Posterior vena cava (tissue), 2 donors: ENCODE measurements at regions of chr3 and their contacts with region 1.

Region 1: DNA sequence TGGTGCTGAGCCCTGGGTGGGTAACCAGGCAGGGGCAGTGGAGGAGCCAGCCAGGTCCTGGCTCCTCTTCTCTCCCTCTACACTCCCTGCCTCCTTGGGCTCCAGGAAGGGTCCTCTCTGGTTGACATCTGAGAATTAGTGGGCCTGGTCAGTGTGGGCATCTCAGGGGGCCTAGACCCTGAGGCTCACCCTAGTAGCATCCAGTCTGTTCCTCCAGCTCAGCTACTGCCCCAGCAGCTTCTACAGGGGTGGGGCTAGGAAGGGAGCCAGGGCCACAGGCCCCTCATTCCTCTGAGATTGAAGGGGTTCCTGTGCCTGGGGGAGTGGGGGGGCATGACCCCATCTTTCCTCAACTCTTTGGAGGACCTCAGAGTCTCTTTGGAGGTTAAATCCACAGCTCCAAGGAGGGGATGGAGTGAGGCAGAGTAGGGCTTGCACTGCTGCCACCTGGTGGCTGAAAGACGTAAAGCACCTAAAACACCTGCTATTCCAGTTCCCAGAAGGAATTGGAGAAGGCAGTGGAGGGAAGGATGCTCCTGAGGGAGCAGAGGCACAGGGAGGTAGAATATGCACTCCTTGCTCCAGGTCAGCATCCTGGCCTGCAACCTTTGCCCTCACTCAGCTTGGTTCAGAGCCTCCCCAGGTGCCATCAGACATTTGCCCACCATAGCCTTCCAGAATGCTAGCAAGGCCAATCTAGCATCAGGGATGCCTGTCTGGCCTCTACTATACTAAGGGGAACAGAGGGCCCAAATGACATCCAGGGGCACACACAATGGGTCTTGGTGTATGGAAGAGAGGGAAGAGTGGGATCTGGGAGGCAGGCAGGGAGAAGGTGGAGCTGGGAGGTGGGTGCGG is 25.1 kb downstream of the C3orf18 start:
- DNase-seq: peak; percentile 90

Region 2: DNA sequence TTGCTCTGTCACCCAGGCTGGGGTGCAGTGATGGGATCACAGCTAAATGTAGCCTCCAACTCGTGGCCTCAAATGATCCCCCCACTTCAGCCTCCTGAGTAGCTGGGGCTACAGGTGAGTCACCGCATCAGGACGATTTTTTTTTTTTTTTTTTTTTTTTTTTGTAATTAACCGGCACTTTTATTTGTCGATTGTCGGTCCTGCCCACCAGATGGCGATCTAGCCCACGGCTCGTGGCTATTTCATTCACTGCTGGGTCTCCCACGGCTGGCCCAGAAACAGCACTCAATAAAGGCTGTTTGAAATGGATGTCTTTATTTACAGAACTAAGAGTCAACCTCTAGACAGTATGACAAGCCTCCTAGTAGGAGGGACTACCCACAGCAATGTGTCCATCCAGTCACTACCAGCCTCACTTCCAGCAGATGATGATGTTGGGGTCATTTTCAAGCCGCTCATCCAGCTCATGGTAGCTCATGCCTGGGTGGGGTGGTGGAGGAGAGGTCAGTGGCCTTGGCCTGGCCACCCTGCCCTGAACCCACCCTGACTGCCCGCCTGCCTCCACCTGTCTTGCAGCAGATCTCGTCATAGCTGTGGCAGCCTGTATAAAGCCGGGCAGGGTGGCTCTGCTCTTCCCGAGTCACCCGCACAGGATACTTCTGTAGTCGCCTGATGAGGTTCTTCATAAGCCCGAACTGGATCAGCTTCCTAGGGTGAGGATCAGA is 195.1 kb before region 1 on chr3:
- intact Hi-C with region 1: loop called (anchors 2 to 5 kb)
- DNase-seq: no peak

Region 3: DNA sequence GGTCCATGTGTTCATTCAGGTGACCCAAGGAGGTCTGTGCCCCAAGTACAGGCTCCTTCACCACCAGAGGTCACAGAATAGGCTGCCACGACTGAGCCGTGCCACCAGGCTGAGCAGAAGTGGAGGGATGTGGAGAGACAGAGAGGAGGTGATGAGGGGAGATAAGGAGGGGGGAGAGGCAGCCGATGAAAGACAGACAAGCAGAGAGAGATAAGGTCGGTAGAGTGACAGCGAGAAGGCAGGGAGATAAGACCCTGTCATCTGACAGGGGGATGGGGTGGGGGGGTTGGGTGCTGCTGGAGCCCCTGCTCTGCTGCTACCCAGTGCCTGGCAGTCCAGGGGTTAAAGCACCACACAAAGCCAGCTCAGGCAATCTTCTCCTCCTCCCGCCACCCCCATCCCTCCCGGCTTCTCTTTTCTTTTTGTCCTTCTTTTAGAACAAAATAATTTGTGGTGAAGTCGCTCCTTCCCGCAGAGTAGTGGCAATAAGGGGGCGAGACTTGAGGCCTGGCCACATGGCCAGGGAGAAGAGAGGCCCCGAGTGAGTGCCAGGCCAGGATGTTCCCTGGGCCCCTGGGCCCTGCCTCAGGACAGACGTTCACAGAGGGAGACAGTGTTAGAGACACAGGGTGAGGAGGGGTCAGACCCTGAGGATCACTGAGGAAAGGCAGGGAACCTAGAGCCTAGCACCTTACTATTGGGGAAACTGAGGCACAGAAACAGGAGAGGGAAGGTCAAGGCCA is 106.9 kb before region 1 on chr3:
- intact Hi-C with region 1: loop called (anchors 1 to 2 kb)
- DNase-seq: no peak

Region 4: GRCh38 chr3:50627407-50628051 is 85.1 kb after region 1 on chr3:
- intact Hi-C with region 1: no loop called
- DNase-seq: peak; percentile 84